Adrenal gland (tissue), 19 donors: ENCODE measurements at regions of chr18 and their contacts with region 1.

Region 1: GRCh38 chr18:41906528-41907146 is 48.4 kb upstream of the PIK3C3 start:
- DNase-seq: no peak
- H3K4me3 ChIP-seq: peak overlapping the region in 1 of 4 donors; percentile 33
- H3K27ac ChIP-seq: no peak overlapping the region
- H3K4me1 ChIP-seq: no peaks in the 10 kb centered on the region
- H3K27me3 ChIP-seq: no peaks in the 10 kb centered on the region
- CTCF ChIP-seq: peak; percentile 49 to 80 (median 63)
- POLR2A ChIP-seq: no peak

Region 2: DNA sequence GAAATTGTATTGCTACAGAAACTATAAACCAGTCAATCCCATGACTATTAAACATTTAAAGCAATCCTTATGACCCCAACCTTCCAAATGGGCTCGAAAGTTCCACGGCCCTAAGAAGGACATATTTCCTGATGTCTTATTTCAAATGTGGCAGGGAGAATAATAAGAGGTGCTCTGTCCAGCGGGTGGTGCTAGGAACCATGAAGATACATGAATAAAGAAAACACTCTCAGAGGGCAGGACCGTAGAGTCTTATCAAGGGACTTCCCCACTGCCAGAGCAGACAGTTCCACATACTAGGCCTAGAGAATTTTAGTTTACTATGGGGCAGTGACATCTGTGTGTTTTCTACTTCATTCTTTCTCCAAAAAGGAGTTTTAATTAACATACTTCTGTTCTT is 138.7 kb before region 1 on chr18:
- intact Hi-C with region 1: loop called in 1 of 2 experiments (anchors 10 kb)
- DNase-seq: peak; percentile 27 to 73 (median 29)
- H3K4me3 ChIP-seq: no peak overlapping the region
- H3K27ac ChIP-seq: no peak overlapping the region
- H3K4me1 ChIP-seq: no peaks in the 10 kb centered on the region
- H3K27me3 ChIP-seq: no peaks in the 10 kb centered on the region
- CTCF ChIP-seq: peak in 1 of 6 experiments; percentile 38
- POLR2A ChIP-seq: no peak

Region 3: GRCh38 chr18:42053188-42053781 is 146.6 kb after region 1 on chr18:
- intact Hi-C with region 1: no loop called
- DNase-seq: peak; percentile 43 to 76 (median 64)
- H3K4me3 ChIP-seq: peak overlapping the region in 1 of 4 donors; percentile 40
- H3K27ac ChIP-seq: no peak overlapping the region
- H3K4me1 ChIP-seq: peaks cover 0 to 12% of the 10 kb centered on the region in 2 donors
- H3K27me3 ChIP-seq: no peaks in the 10 kb centered on the region
- CTCF ChIP-seq: peak; percentile 60 to 89 (median 76)
- POLR2A ChIP-seq: no peak